IMR-90 (cell line): ENCODE measurements at regions of chr6 and their contacts with region 1.

Region 1: GRCh38 chr6:153048631-153049030 is 46.1 kb upstream of the MTRF1L start:
- DNase-seq: no peak
- ATAC-seq: no peak
- H3K4me3 ChIP-seq: no peak overlapping the region
- H3K27ac ChIP-seq: no peak overlapping the region
- H3K4me1 ChIP-seq: no peaks in the 10 kb centered on the region
- H3K27me3 ChIP-seq: no peaks in the 10 kb centered on the region
- CTCF ChIP-seq: no peak
- POLR2A ChIP-seq: no peak
- RAD21 ChIP-seq: no peak

Region 2: GRCh38 chr6:153301602-153302001 is 253.0 kb after region 1 on chr6:
- CTCF ChIA-PET with region 1: no interaction called
- POLR2A ChIA-PET with region 1: no interaction called
- dilution Hi-C with region 1: no loop called
- in situ Hi-C with region 1: loop called (anchors 5 kb)
- intact Hi-C with region 1: no loop called
- DNase-seq: no peak
- ATAC-seq: no peak
- H3K4me3 ChIP-seq: no peak overlapping the region
- H3K27ac ChIP-seq: no peak overlapping the region
- H3K4me1 ChIP-seq: no peaks in the 10 kb centered on the region
- H3K27me3 ChIP-seq: no peaks in the 10 kb centered on the region
- CTCF ChIP-seq: no peak
- POLR2A ChIP-seq: no peak
- RAD21 ChIP-seq: no peak